ENCODE measurements at regions of chr4 and their contacts with region 1.

Region 1: GRCh38 chr4:123418351-123418931 is 21.8 kb downstream of the SPRY1 start:
- DNase-seq: no peak
- ATAC-seq: peak; percentile 68 to 86 (median 82)
- H3K4me3 ChIP-seq: peak overlapping the region; percentile 6
- H3K27ac ChIP-seq: peak overlapping the region; percentile 70
- H3K4me1 ChIP-seq: peaks cover 13% of the 10 kb centered on the region
- H3K27me3 ChIP-seq: no peaks in the 10 kb centered on the region
- CTCF ChIP-seq: no peak

Region 2: DNA sequence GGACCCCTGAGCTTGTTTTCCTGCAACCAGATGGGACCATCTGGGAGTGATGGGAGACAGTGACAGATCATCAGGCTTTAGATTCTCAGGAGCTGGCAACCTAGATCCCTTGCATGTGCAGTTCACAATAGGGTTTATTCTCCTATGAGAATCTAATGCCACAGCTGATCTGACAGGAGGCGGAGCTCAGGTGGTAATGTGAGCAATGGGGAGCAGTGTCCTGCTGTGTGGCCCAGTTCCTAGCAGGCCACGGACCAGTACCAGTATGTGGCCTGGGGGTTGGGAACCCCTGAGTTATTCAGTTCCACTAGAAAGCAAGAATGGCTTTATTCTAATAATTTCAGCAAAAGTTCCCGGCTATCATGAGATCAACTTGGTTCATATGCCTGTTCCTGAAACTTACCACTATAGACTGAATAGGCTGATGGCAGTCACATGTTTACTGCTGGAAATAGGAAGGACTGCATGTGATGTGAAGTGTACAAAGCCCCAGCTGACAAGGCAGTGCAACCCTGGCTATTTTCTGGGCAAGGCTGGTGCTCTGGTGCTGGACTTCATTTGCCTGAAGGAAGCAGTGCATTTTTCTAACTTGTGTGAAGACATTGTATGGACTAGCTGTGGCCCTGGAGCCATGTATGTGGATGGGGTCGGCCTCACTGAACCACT is 85.4 kb after region 1 on chr4:
- intact Hi-C with region 1: loop called in 1 of 2 experiments (anchors 5 kb)
- DNase-seq: no peak
- ATAC-seq: no peak
- H3K4me3 ChIP-seq: no peak overlapping the region
- H3K27ac ChIP-seq: no peak overlapping the region
- H3K4me1 ChIP-seq: peaks cover 8% of the 10 kb centered on the region
- H3K27me3 ChIP-seq: no peaks in the 10 kb centered on the region
- CTCF ChIP-seq: no peak